ENCODE measurements at regions of chr1 and their contacts with region 1.

Region 1: GRCh38 chr1:201511941-201512539 is 5.1 kb upstream of the CSRP1 start:
- DNase-seq: peak; percentile 64
- H3K4me3 ChIP-seq: no peak overlapping the region
- H3K27ac ChIP-seq: peak overlapping the region; percentile 43
- H3K4me1 ChIP-seq: peaks cover 60% of the 10 kb centered on the region
- H3K27me3 ChIP-seq: no peaks in the 10 kb centered on the region
- CTCF ChIP-seq: no peak

Region 2: DNA sequence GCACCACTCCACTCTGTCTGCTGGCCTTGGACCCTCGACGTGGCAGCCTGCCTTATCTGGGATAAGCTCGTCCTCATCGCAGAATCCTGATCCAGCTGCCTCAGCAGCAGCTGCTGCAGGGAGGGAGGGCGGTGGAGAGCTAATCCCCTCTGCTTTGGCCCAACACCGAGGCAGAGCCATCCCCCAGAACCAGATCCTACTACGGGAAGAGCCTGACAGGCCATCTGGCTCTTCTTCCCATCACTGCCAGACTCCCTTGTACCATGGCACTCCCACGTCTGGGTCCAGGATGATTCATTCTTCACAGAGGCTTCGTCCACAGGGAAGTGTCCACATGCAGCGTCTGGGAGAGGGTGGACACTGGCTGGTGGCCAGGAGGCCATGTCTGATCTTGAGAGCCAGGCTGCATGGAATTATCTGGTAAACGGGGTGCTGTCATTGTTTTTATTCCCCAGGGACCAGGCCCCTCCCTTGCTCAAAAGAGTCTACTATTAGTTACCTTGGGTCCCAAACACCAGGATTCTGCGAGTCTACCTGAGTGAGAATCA is 243.4 kb before region 1 on chr1:
- CTCF ChIA-PET with region 1: no interaction called
- POLR2A ChIA-PET with region 1: no interaction called
- intact Hi-C with region 1: loop called (anchors 1 kb)
- DNase-seq: peak; percentile 74
- H3K4me3 ChIP-seq: no peak overlapping the region
- H3K27ac ChIP-seq: peak overlapping the region; percentile 99
- H3K4me1 ChIP-seq: peaks cover 83% of the 10 kb centered on the region
- H3K27me3 ChIP-seq: no peaks in the 10 kb centered on the region
- CTCF ChIP-seq: no peak

Region 3: GRCh38 chr1:201447911-201448871 is 63.8 kb before region 1 on chr1:
- CTCF ChIA-PET with region 1: interaction called, 28 read pairs
- POLR2A ChIA-PET with region 1: interaction called, 10 read pairs
- intact Hi-C with region 1: loop called (anchors 2 kb)
- DNase-seq: peak; percentile 82
- H3K4me3 ChIP-seq: no peak overlapping the region
- H3K27ac ChIP-seq: no peak overlapping the region
- H3K4me1 ChIP-seq: peaks cover 31% of the 10 kb centered on the region
- H3K27me3 ChIP-seq: no peaks in the 10 kb centered on the region
- CTCF ChIP-seq: peak; percentile 87

Region 4: DNA sequence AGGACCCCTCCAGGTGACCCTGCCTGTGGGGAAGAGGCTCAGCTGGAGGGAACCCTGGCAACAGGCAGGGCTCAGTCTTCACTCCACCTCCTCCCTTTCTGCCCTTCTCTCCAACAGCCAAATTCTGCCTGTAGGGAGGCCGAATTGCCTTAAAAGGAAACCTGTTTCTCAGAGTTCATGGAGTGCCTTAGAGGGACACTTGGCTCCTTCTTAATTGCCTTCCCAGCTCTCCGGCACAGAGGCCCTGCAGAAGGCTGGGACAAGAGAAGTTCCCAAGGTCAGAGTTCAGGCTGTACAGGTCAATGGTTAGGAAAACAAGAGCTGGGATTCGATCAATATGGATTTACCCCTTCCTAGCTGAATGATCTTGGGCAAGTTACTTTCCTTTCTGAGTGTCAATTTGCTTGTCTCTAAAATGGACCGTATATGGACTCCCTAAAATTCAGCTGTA is 11.3 kb before region 1 on chr1:
- CTCF ChIA-PET with region 1: interaction called, 37 read pairs
- POLR2A ChIA-PET with region 1: interaction called, 4 read pairs
- intact Hi-C with region 1: no loop called
- DNase-seq: no peak
- H3K4me3 ChIP-seq: no peak overlapping the region
- H3K27ac ChIP-seq: peak overlapping the region; percentile 61
- H3K4me1 ChIP-seq: peaks cover 56% of the 10 kb centered on the region
- H3K27me3 ChIP-seq: no peaks in the 10 kb centered on the region
- CTCF ChIP-seq: no peak

Region 5: DNA sequence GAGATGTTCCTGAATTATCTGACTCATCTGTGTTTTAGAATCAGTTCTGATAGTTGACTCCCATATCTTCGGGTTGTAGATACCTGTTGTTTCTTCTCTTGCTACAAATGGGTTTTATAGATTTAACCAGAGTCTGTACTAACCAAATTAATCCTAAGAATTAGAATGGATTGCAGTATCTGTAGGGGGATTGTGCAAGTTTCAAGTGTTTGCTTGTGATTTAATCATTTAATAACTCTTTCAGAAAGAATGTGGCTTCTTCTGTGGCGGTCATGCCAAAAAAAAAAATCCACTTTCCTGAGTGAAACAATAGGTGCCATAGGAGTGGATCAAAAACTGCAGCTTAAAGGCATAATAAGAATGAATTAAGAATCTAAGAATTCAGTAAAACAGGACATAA is 326.3 kb after region 1 on chr1:
- CTCF ChIA-PET with region 1: no interaction called
- POLR2A ChIA-PET with region 1: interaction called, 12 read pairs
- intact Hi-C with region 1: no loop called
- DNase-seq: peak; percentile 13
- H3K4me3 ChIP-seq: no peak overlapping the region
- H3K27ac ChIP-seq: no peak overlapping the region
- H3K4me1 ChIP-seq: peaks cover 12% of the 10 kb centered on the region
- H3K27me3 ChIP-seq: no peaks in the 10 kb centered on the region
- CTCF ChIP-seq: no peak